ENCODE measurements at regions of chr6 and their contacts with region 1.

Region 1: GRCh38 chr6:25992413-25993037 is 29.9 kb downstream of the TRIM38 start:
- DNase-seq: peak; percentile 96
- H3K4me3 ChIP-seq: peak overlapping the region; percentile 42 to 82 (median 81)
- H3K27ac ChIP-seq: peak overlapping the region; percentile 82
- H3K4me1 ChIP-seq: peaks cover 13% of the 10 kb centered on the region
- H3K27me3 ChIP-seq: no peaks in the 10 kb centered on the region
- CTCF ChIP-seq: peak; percentile 99 to 100
- POLR2A ChIP-seq: peak; percentile 96

Region 2: DNA sequence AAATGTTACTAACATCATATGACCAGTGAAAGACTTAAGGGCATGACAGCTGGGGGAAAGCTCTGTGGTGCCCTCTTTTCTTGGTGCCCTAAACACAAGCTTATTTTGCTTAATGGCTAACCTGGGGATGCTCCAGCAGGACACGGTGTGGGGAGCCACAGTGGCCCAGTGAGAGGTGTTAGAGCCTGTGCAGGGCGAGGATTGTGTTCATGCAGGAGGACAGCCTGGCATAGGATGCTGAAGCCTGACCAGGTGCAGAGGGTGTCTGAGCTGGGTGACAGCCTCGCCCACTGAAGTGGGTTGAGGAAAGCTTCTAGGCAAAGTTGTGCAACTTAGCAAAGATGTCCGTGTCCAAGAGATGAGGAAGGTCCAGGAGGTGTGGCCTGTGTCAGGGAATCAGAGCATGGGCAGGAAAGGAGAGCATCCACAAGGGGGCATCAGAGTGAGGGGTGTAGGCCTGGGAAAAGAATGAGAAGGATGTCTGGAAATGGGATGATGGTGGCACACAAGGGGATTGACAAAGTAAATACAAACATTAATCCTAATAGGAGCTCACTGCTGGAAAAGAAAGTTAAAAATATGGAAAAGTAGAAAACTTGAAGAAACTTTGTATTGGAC is 204.1 kb before region 1 on chr6:
- CTCF ChIA-PET with region 1: interaction called, 6 read pairs
- POLR2A ChIA-PET with region 1: no interaction called
- dilution Hi-C with region 1: no loop called
- intact Hi-C with region 1: loop called (anchors 2 kb)
- DNase-seq: peak; percentile 69
- H3K4me3 ChIP-seq: no peak overlapping the region
- H3K27ac ChIP-seq: no peak overlapping the region
- H3K4me1 ChIP-seq: no peaks in the 10 kb centered on the region
- H3K27me3 ChIP-seq: no peaks in the 10 kb centered on the region
- CTCF ChIP-seq: peak; percentile 63 to 64
- POLR2A ChIP-seq: no peak

Region 3: DNA sequence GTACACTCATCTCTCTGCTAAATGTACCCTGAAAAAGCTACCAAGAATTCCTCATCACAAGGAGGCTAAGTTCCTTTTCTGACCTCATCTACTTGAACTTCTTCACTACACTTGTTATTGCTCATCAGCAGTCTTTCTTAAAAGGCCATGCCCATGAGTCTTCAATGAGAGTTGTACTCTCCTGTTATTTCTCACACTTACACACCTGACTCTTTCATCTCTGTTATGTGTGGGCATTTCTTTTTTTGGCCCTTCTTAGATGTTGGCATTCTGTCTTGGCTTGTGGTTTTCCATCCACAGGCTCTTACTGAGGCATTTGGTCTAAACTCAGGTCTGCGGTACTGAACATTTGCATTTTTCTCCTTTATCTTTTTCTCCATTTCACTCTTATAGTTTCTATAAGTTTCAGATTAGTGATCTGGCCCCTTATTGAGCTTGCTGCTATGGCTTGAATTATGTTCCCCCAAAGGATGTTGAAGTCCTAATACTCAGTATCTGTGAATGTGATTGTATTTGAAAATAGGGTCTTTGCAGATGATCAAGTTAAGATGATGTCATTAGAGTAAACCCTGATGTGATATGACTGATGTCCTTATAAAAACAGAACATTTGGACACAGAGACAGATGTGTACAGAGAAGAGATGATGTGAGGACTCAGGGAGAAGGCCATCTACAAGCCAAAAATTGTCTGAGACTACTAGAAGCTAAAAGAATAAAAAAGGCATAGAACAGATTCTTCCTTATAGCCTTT is 149.8 kb before region 1 on chr6:
- CTCF ChIA-PET with region 1: no interaction called
- POLR2A ChIA-PET with region 1: no interaction called
- dilution Hi-C with region 1: no loop called
- intact Hi-C with region 1: no loop called
- DNase-seq: no peak
- H3K4me3 ChIP-seq: no peak overlapping the region
- H3K27ac ChIP-seq: no peak overlapping the region
- H3K4me1 ChIP-seq: no peaks in the 10 kb centered on the region
- H3K27me3 ChIP-seq: no peaks in the 10 kb centered on the region
- CTCF ChIP-seq: no peak
- POLR2A ChIP-seq: no peak

Region 4: DNA sequence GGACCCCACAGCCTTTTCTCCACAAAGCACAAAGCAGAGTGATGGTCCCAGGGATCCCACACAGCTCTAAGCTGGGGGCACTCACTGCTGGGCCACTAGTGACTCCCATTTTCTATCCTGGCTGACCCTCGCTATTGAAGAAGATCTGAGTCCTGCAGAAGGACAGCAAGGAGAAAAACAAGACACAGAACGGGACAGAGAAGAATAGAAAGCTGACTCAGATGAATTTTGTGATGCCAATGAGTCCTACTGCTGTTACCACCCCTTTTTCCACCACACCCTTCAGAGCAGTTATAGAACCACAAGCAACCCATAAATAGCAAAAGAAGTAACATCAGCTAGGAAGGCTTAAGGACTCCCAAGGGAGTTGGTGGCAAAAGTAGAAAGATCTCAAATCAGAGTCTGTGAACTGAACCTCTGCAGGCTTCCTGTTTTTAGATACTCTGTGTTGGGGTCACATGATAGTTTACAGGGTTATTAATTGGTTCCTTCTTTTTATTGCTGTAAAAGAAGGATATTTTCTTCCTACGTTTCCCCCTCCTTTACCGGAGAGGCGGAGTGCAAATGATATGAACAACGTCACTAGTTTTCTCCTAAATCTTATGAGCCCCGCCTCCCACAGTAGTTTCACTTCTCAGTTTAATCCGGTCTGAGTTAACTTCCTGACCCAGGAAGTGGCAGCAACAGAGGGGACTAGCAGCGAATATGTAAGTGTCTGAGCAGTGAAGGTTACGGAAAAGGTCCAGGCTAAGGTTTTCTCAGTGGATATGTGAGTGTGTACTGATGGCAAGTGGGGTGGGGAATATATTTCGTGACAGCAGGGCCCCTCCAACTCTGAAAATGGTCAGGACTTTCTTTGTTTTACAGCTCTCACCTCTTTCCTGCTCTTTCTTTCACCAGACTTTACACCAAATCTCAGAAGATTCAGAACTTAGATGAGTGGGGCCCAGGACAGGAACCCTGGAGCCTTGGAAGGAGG is 30.1 kb before region 1 on chr6 and contains the start of gene TRIM38:
- CTCF ChIA-PET with region 1: interaction called, 29 read pairs
- POLR2A ChIA-PET with region 1: interaction called, 4 read pairs
- dilution Hi-C with region 1: no loop called
- intact Hi-C with region 1: loop called (anchors 1 kb)
- DNase-seq: peak; percentile 93
- H3K4me3 ChIP-seq: peak within 1 kb of the TSS; percentile 40 to 86 (median 78)
- H3K27ac ChIP-seq: peak within 1 kb of the TSS; percentile 87
- H3K4me1 ChIP-seq: peaks cover 27% of the 10 kb centered on the region
- H3K27me3 ChIP-seq: no peaks in the 10 kb centered on the region
- CTCF ChIP-seq: no peak
- POLR2A ChIP-seq: peak; percentile 95
- total RNA-seq, gene TRIM38: 13.2 and 13.7 TPM in 2 replicates

Region 5: GRCh38 chr6:25981568-25982263 is 10.8 kb before region 1 on chr6:
- CTCF ChIA-PET with region 1: interaction called, 10 read pairs
- POLR2A ChIA-PET with region 1: interaction called, 3 read pairs
- dilution Hi-C with region 1: no loop called
- intact Hi-C with region 1: no loop called
- DNase-seq: no peak
- H3K4me3 ChIP-seq: no peak overlapping the region
- H3K27ac ChIP-seq: no peak overlapping the region
- H3K4me1 ChIP-seq: no peaks in the 10 kb centered on the region
- H3K27me3 ChIP-seq: no peaks in the 10 kb centered on the region
- CTCF ChIP-seq: no peak
- POLR2A ChIP-seq: no peak

Region 6: DNA sequence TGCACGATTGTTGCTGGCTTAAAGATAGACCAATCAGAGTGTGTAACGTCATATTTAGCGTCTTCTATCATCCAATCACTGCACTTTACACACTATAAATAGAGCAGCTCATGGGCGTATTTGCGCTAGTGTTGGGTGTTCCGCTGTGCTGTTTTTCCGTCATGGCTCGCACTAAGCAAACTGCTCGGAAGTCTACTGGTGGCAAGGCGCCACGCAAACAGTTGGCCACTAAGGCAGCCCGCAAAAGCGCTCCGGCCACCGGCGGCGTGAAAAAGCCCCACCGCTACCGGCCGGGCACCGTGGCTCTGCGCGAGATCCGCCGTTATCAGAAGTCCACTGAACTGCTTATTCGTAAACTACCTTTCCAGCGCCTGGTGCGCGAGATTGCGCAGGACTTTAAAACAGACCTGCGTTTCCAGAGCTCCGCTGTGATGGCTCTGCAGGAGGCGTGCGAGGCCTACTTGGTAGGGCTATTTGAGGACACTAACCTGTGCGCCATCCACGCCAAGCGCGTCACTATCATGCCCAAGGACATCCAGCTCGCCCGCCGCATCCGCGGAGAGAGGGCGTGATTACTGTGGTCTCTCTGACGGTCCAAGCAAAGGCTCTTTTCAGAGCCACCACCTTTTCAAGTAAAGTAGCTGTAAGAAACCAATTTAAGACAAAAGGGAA is 27.9 kb after region 1 on chr6:
- CTCF ChIA-PET with region 1: interaction called, 29 read pairs
- POLR2A ChIA-PET with region 1: interaction called, 29 read pairs
- dilution Hi-C with region 1: no loop called
- intact Hi-C with region 1: loop called (anchors 1 kb)
- DNase-seq: peak; percentile 96
- H3K4me3 ChIP-seq: peak overlapping the region; percentile 2 to 69 (median 53)
- H3K27ac ChIP-seq: peak overlapping the region; percentile 84
- H3K4me1 ChIP-seq: peaks cover 25% of the 10 kb centered on the region
- H3K27me3 ChIP-seq: no peaks in the 10 kb centered on the region
- CTCF ChIP-seq: no peak
- POLR2A ChIP-seq: peak; percentile 99